Posterior vena cava (tissue), 2 donors: ENCODE measurements at regions of chr22 and their contacts with region 1.

Region 1: GRCh38 chr22:39197396-39197977 is 45.0 kb upstream of the CBX7 start:
- DNase-seq: no peak

Region 2: DNA sequence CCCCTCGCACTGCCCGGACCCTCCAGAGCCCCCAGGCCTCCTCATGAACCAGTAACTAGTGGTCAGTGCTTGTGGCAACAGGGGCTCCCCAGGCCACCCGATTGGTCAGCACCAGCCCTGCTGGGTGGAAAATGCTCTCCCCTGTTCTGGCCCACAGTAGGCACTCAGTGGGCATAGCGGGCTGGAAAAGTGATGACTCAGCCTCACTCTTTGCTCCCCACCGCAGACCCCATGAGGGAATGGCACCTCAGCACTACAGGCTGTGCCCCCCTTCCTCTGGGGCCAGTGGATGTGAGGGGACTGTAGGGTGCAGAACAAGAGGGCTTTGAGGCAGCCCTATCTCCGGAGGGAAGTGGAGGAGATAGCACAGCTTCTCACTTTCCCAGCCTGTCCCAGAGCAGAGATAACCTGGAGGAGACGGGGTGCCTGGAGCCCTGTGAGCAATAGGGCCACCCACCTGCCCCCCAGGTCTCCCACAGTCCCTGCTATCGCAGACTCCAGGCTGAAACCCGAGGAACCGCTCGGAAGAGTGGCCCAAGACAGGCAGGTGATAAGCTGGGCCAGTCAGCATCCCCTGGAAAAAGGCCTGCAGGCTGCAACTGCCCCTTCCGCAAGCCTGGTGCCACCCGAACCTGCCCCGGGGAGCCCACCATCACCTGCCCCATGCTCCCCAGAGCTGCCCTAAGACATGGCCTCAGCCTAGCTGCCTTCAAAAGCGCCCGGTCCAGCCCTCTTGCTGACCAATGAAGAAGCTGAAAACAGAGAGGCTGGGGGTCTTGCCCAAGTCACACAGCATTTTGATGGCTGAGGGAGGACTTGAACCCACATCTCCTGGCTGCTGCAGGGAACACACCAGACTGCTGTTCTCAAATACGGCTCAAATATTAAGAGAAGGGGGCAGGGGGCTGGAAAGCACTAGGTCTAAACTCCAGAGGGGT is 76.7 kb after region 1 on chr22:
- intact Hi-C with region 1: loop called in 1 of 2 experiments (anchors 1 kb)
- DNase-seq: no peak